ENCODE measurements at regions of chr18 and their contacts with region 1.

Region 1: DNA sequence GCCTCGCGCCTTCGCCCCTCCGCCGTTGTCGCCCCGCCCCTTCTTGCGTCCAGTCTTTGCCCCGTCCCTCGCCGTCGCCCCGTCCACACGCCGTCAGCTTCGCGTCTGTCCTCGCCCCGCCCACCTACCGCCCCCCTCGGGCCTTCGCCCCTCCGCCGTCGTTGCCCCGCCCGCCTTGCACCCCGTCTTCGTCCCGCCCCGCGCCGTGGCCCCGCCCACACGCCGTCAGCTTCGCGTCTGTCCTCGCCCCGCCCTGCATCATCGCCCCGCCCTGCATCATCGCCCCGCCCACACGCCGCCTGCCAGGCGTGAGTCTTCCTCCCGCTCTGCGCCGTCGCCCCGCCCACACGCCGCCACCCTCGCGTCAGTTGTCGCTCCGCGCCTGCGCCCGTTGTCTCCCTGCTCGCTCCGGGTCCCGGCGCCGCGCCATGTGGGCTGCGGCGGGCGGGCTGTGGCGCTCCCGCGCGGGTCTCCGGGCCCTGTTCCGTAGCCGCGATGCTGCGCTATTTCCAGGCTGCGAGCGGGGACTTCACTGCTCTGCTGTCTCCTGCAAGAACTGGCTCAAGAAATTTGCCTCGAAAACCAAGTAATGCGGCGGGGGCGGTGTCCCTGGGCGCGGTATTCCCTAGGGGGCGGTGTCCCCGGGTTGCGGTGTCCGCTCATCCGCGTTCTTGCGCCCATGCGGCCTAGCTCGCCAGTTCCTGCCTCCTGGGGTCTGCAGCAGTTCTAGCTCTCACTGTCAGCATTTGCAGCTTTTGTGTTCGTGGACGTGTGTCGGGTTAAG is at the start of gene RBFA:
- DNase-seq: peak; percentile 100
- ATAC-seq: peak; percentile 87
- H3K4me3 Mint-ChIP-seq: peak within 1 kb of the TSS; percentile 94
- H3K27ac Mint-ChIP-seq: peak within 1 kb of the TSS; percentile 89
- H3K4me1 Mint-ChIP-seq: peaks cover 21% of the 10 kb centered on the region
- H3K27me3 Mint-ChIP-seq: no peaks in the 10 kb centered on the region
- total RNA-seq, gene RBFA: 32.2 to 39.1 TPM

Region 2: GRCh38 chr18:79393635-79394533 is 640.4 kb before region 1 on chr18:
- CTCF ChIA-PET with region 1: no interaction called
- POLR2A ChIA-PET with region 1: no interaction called
- intact Hi-C with region 1: loop called in 1 of 2 experiments (anchors 1 kb)
- DNase-seq: peak; percentile 69
- ATAC-seq: peak; percentile 8
- H3K4me3 Mint-ChIP-seq: peak overlapping the region; percentile 73
- H3K27ac Mint-ChIP-seq: peak overlapping the region; percentile 78
- H3K4me1 Mint-ChIP-seq: peaks cover 16% of the 10 kb centered on the region
- H3K27me3 Mint-ChIP-seq: peaks cover 10% of the 10 kb centered on the region

Region 3: GRCh38 chr18:79679111-79679872 is 355.0 kb before region 1 on chr18 and contains the start of gene CTDP1:
- CTCF ChIA-PET with region 1: no interaction called
- POLR2A ChIA-PET with region 1: no interaction called
- intact Hi-C with region 1: loop called (anchors 1 to 5 kb)
- DNase-seq: peak; percentile 99
- ATAC-seq: peak; percentile 91
- H3K4me3 Mint-ChIP-seq: peak within 1 kb of the TSS; percentile 90
- H3K27ac Mint-ChIP-seq: peak within 1 kb of the TSS; percentile 97
- H3K4me1 Mint-ChIP-seq: peaks cover 65% of the 10 kb centered on the region
- H3K27me3 Mint-ChIP-seq: no peaks in the 10 kb centered on the region
- total RNA-seq, gene CTDP1: 36.7 to 45.5 TPM

Region 4: GRCh38 chr18:79964330-79965118 is 69.7 kb before region 1 on chr18 and contains the start of gene HSBP1L1:
- CTCF ChIA-PET with region 1: interaction called, 3 read pairs
- POLR2A ChIA-PET with region 1: no interaction called
- intact Hi-C with region 1: loop called in 1 of 2 experiments (anchors 1 kb)
- DNase-seq: peak; percentile 83
- ATAC-seq: peak; percentile 79
- H3K4me3 Mint-ChIP-seq: peak within 1 kb of the TSS; percentile 71
- H3K27ac Mint-ChIP-seq: peak within 1 kb of the TSS; percentile 80
- H3K4me1 Mint-ChIP-seq: peaks cover 41% of the 10 kb centered on the region
- H3K27me3 Mint-ChIP-seq: peaks cover 2% of the 10 kb centered on the region
- total RNA-seq, gene HSBP1L1: 14.4 to 16.9 TPM

Region 5: GRCh38 chr18:80108728-80109675 is 74.7 kb after region 1 on chr18 and contains the start of gene ADNP2:
- CTCF ChIA-PET with region 1: interaction called, 7 read pairs
- POLR2A ChIA-PET with region 1: interaction called, 10 read pairs
- intact Hi-C with region 1: loop called (anchors 1 kb)
- DNase-seq: peak; percentile 92
- ATAC-seq: peak; percentile 83
- H3K4me3 Mint-ChIP-seq: peak within 1 kb of the TSS; percentile 77
- H3K27ac Mint-ChIP-seq: peak within 1 kb of the TSS; percentile 86
- H3K4me1 Mint-ChIP-seq: peaks cover 48% of the 10 kb centered on the region
- H3K27me3 Mint-ChIP-seq: no peaks in the 10 kb centered on the region
- total RNA-seq, gene ADNP2: 22.8 to 25.7 TPM

Region 6: DNA sequence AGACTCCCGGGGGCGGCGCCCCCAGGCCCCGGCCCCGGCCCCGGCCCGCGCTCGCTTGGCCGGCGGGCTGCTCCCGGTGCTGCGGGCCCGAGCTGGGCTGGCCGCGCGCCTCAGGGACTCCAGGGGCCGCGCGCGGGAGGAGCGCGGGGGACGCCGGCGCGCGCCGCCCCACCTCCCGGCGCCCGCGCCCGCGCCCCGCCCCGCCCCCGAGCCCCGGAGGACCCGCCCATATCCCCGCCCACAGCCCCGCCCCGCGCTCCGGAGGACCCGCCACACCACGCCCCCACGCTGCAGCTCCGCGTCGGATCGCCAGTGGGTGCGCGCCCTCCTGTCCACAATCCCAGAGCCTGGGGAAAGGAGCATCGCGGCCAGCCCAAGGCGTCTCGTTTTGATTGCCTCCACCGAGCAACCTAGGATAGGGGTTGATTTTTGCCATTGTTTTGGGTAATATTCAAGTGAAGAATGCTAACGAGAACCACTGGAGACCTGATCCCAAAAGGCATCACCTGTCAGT is 213.2 kb after region 1 on chr18 and contains the start of gene PARD6G:
- CTCF ChIA-PET with region 1: no interaction called
- POLR2A ChIA-PET with region 1: no interaction called
- intact Hi-C with region 1: loop called in 1 of 2 experiments (anchors 1 kb)
- DNase-seq: peak; percentile 82
- ATAC-seq: peak; percentile 82
- H3K4me3 Mint-ChIP-seq: peak within 1 kb of the TSS; percentile 43
- H3K27ac Mint-ChIP-seq: no peak within 1 kb of the TSS
- H3K4me1 Mint-ChIP-seq: peaks cover 5% of the 10 kb centered on the region
- H3K27me3 Mint-ChIP-seq: peaks cover 38% of the 10 kb centered on the region
- total RNA-seq, gene PARD6G: not detected

Measured in activated CD4-positive, alpha-beta T cell treated with anti-CD3 and anti-CD28 coated beads for 36 hours (primary cell).